Activated T-helper 1 cell treated with anti-CD3 and anti-CD28 coated beads, Interleukin-12 subunit alpha, Interleukin-12 subunit beta, Interleukin-2, Interleukin-4 antibody, amounts not matched to agents 30 ng/mL and 10 ng/mL and 1 ng/mL, durations not matched to agents 14 hours and 24 hours and 36 hours (primary cell): ENCODE measurements at regions of chr6 and their contacts with region 1.

Region 1: DNA sequence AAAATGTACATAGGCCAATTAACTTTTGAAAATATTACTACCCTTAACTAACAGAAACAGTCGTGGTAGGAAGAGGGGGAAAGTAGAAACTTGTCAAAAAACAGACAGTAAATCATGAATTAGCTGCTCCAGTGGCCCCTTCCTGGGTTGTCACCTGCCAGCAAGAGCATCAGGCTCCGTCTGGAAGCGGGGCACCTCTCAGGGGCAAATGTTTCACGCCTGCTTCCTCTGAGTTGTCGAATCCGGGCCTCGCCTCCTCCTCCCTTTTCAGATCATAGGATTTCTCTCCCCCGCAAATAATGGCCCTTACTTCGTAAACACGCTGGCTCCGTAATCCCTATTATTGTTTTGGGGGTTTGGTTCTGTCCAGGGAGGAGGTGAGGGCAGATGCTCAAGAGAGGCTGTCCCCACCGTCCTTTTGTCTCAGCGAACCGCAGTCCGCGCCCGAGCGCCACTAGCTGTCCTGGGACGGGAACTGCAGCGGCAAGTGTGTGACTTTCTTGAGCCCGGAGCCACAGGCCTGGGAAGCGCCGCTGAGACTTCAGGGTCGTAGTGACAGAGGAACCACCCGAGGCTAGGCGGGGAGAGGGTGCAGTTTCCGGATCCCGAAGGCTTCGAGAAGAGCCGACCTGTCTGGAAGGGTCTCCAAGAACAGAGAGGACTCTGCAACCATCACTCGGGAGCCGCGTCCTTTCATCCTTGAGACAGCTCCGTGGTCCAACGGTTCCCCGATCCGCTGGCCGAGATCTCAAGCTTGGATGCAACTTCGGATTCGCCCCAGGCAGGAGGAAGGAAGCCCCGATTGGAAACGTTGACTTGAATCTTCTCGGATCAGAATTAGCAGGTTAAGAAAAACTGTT is 214.5 kb upstream of the ZNF184 start:
- DNase-seq: peak; percentile 74
- H3K4me3 Mint-ChIP-seq: peak overlapping the region; percentile 88
- H3K27ac Mint-ChIP-seq: peak overlapping the region; percentile 91
- H3K4me1 Mint-ChIP-seq: peaks cover 26% of the 10 kb centered on the region
- H3K27me3 Mint-ChIP-seq: peaks cover 24% of the 10 kb centered on the region

Region 2: GRCh38 chr6:26553635-26554446 is 1133.5 kb before region 1 on chr6:
- intact Hi-C with region 1: loop called (anchors 5 kb)
- DNase-seq: peak; percentile 72
- H3K4me3 Mint-ChIP-seq: no peak overlapping the region
- H3K27ac Mint-ChIP-seq: no peak overlapping the region
- H3K4me1 Mint-ChIP-seq: peaks cover 18% of the 10 kb centered on the region
- H3K27me3 Mint-ChIP-seq: peaks cover 2% of the 10 kb centered on the region

Region 3: DNA sequence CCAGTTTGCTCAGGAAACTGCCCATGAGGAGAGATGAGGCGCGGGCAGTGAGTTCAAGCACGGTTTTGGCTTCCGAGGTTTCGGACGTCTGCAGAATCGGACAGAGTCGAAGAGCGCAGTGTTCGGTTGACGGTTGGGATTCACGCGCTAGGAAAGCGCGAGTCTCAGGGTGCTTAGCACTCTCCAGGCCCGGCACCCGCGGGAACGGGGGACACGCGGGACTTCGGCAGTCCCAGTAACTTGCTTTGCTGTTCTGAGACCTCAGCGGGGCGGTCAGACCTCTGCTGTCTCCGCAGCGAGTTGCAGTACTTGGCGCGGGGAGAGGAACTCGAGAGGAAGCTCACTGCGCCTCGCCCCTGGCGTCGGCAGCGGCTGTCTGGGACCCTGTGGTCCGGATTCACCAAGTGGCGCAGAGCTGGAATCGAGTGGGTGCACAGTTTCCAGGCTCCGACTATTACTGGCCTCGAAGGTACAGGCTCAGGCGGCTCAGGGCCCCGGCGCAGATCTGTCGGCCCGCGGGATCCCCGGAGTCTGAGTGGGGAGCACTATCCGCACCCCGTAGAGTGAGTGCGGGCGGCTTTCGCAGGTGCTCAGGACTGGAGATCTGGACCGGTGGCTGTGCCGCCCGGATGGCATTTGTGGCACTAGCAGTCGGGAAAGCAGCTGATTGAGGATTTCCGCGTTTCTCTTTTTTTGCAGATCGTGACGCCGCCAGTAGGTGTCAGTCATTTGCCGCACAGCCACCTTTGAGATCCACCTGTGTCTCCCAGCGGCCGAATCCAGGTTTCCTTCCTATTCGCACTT is 375.0 kb before region 1 on chr6 and contains the start of gene POM121L2:
- intact Hi-C with region 1: loop called (anchors 2 kb)
- DNase-seq: peak; percentile 41
- H3K4me3 Mint-ChIP-seq: peak within 1 kb of the TSS; percentile 78
- H3K27ac Mint-ChIP-seq: no peak within 1 kb of the TSS
- H3K4me1 Mint-ChIP-seq: peaks cover 7% of the 10 kb centered on the region
- H3K27me3 Mint-ChIP-seq: peaks cover 65% of the 10 kb centered on the region
- total RNA-seq, gene POM121L2: not detected in 2 replicates

Region 4: GRCh38 chr6:27518881-27519795 is 168.2 kb before region 1 on chr6:
- intact Hi-C with region 1: loop called (anchors 1 kb)
- DNase-seq: peak; percentile 40
- H3K4me3 Mint-ChIP-seq: peak overlapping the region; percentile 89
- H3K27ac Mint-ChIP-seq: peak overlapping the region; percentile 86
- H3K4me1 Mint-ChIP-seq: peaks cover 16% of the 10 kb centered on the region
- H3K27me3 Mint-ChIP-seq: peaks cover 25% of the 10 kb centered on the region

Region 5: DNA sequence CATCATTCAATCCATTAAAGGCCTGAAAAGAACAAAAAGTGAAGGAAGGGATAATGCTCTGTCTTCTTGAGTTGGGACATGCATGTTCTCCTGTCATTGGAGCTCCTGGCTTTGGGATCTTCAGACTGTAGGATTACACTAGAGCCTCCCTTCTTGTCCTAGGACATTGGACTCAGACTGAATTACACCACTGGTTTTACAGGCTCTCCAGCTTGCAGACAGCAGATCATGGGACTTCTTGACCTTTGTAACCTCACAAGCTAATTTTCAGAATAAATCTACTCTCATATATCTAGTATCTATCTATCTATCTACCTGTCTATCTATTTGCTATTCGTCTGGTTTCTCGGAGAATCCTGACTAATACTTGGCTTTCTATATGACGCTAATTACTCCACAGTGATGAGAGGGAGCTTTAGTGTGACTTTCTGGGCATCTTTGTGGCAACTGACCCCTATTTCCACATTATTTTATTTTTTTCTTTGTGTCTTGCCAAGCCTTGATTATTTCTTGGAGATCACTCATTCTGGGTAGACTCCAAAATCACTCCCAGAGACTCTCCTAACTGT is 62.6 kb before region 1 on chr6:
- intact Hi-C with region 1: no loop called
- DNase-seq: no peak
- H3K4me3 Mint-ChIP-seq: no peak overlapping the region
- H3K27ac Mint-ChIP-seq: no peak overlapping the region
- H3K4me1 Mint-ChIP-seq: no peaks in the 10 kb centered on the region
- H3K27me3 Mint-ChIP-seq: peaks cover 36% of the 10 kb centered on the region

Region 6: GRCh38 chr6:27720607-27721580 is 33.5 kb after region 1 on chr6:
- intact Hi-C with region 1: loop called (anchors 2 kb)
- DNase-seq: no peak
- H3K4me3 Mint-ChIP-seq: no peak overlapping the region
- H3K27ac Mint-ChIP-seq: no peak overlapping the region
- H3K4me1 Mint-ChIP-seq: peaks cover 29% of the 10 kb centered on the region
- H3K27me3 Mint-ChIP-seq: peaks cover 11% of the 10 kb centered on the region

Region 7: DNA sequence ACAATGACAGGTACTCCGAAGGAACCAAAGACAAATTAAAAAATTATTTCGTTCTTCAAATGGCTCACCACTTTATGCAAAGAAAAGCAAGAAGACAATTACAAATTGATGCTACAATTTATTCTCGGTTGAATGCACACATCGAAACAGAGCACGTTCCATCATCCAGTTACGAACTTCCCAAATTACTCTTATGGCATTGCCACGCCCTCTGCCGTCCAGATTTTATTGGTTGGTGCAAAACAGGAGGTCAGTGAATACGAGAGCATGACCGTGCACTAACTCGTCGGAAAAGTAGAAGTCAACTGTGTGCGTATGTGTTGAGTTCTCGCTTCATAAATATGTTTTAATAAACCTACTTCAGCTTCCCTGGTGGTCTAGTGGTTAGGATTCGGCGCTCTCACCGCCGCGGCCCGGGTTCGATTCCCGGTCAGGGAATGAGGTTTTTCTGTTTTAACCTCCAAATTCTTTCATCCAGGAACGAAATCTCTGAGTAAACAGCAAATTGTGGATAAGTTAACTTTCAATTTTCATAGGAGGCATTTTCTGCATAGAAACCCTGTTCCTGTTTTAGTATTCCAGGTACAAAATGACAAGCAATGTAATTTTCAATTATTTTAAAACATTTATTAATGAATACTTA is 1294.6 kb after region 1 on chr6:
- intact Hi-C with region 1: loop called (anchors 5 kb)
- DNase-seq: peak; percentile 59
- H3K4me3 Mint-ChIP-seq: peak overlapping the region; percentile 90
- H3K27ac Mint-ChIP-seq: peak overlapping the region; percentile 95
- H3K4me1 Mint-ChIP-seq: peaks cover 59% of the 10 kb centered on the region
- H3K27me3 Mint-ChIP-seq: peaks cover 22% of the 10 kb centered on the region